ENCODE measurements at regions of chr4 and their contacts with region 1.

Region 1: GRCh38 chr4:47383829-47384427 is 79.6 kb downstream of the COMMD8 start:
- DNase-seq: peak; percentile 10
- ATAC-seq: 0 out of 2 replicates have a peak, but pooled peaks have one; percentile 46
- H3K4me3 ChIP-seq: no peak overlapping the region
- H3K27ac ChIP-seq: no peak overlapping the region
- H3K4me1 ChIP-seq: no peaks in the 10 kb centered on the region
- H3K27me3 ChIP-seq: peaks cover 8% of the 10 kb centered on the region; the same call in 1 of the 2 replicates
- CTCF ChIP-seq: peak; percentile 25 to 64 (median 33); a peak in 4 of 6 replicates
- POLR2A ChIP-seq: no peak
- RAD21 ChIP-seq: peak; percentile 64

Region 2: DNA sequence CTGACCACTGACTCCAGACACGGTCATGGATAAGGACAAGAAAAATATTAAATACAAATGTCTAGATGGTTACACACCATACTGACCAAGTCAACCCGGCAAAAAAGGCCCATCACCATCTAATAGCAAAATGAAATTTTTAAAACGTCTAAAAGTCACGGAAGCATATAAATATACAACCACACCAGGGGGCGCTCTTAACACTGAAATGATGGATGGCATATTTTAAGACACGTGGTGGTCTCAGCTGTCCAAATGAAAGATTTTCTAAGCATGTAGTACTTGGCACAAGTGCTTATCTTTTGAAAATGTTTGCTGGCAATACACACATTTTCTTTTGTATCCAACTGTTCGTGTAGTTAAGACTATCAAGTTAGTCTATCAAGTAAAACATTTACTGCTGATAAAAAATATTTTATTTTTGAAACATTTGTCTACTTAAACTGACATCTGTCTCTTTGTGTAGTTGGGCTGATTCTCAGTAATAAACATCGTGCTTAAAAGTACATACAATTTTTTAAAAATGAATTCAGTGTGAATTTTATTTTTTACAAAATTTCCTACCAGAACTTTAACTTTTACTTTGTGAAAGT is 539.5 kb before region 1 on chr4:
- CTCF ChIA-PET with region 1: no interaction called
- POLR2A ChIA-PET with region 1: no interaction called
- RAD21 ChIA-PET with region 1: no interaction called
- intact Hi-C with region 1: loop called (anchors 1 kb)
- DNase-seq: peak; percentile 27
- ATAC-seq: no peak
- H3K4me3 ChIP-seq: no peak overlapping the region
- H3K27ac ChIP-seq: no peak overlapping the region
- H3K4me1 ChIP-seq: no peaks in the 10 kb centered on the region
- H3K27me3 ChIP-seq: no peaks in the 10 kb centered on the region
- CTCF ChIP-seq: peak; percentile 25 to 69 (median 54); a peak in 4 of 6 replicates
- POLR2A ChIP-seq: no peak
- RAD21 ChIP-seq: peak; percentile 39; the same call in 1 of the 2 replicates

Region 3: GRCh38 chr4:46931981-46932380 is 451.9 kb before region 1 on chr4:
- CTCF ChIA-PET with region 1: no interaction called
- POLR2A ChIA-PET with region 1: no interaction called
- RAD21 ChIA-PET with region 1: no interaction called
- intact Hi-C with region 1: loop called (anchors 10 kb)
- DNase-seq: no peak
- ATAC-seq: no peak
- H3K4me3 ChIP-seq: no peak overlapping the region
- H3K27ac ChIP-seq: no peak overlapping the region
- H3K4me1 ChIP-seq: no peaks in the 10 kb centered on the region
- H3K27me3 ChIP-seq: no peaks in the 10 kb centered on the region
- CTCF ChIP-seq: 0 out of 6 replicates have a peak, but pooled peaks of 2 of the 3 experiments have one; percentile 6 to 20
- POLR2A ChIP-seq: no peak
- RAD21 ChIP-seq: 0 out of 2 replicates have a peak, but pooled peaks have one; percentile 6

Region 4: DNA sequence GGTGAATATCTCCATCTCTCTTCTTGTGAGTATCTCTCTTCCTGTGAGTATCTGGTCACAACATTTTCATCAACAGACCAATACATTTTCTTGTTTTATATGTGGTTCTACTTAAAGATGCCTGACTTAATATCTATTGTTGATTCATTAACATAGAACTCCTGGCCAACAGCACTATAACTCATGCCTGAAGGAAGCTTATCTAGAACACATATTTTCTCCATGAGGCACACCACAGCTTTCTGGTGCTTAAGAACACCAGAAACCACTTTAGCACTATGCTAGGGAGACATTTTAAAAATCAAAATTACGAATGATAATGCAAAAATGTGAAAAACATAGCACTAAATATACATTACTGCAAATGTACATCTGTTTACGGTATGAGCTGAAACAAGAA is 162.2 kb before region 1 on chr4:
- CTCF ChIA-PET with region 1: no interaction called
- POLR2A ChIA-PET with region 1: no interaction called
- RAD21 ChIA-PET with region 1: no interaction called
- intact Hi-C with region 1: no loop called
- DNase-seq: no peak
- ATAC-seq: no peak
- H3K4me3 ChIP-seq: no peak overlapping the region
- H3K27ac ChIP-seq: no peak overlapping the region
- H3K4me1 ChIP-seq: no peaks in the 10 kb centered on the region
- H3K27me3 ChIP-seq: 0 out of 2 replicates have a peak, but pooled peaks cover 25% of the 10 kb centered on the region
- CTCF ChIP-seq: no peak
- POLR2A ChIP-seq: no peak
- RAD21 ChIP-seq: no peak

Measured in HCT116 (cell line).